ENCODE measurements at regions of chr12 and their contacts with region 1.

Region 1: DNA sequence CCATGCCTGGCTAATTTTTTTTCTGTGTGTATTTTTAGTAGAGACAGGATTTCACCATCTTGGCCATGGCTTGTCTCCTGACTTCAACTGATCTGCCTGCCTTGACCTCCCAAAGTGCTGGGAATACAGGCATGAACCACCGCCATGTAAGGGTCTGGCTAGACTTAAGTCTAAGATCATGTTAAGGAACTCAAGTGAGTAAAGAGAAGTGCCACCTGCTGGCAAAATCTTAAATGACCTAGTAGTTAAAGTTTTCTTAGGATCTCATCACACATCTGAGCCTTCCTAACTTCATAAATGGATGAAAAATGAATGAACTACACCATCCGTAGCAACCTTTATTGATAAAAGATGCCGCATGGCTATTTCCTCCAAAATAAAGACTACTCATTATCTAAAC is 1.7 kb upstream of the C12orf56 start:
- ATAC-seq: peak in 3 of 8 experiments; percentile 45 to 63 (median 57)
- H3K4me3 ChIP-seq: no peak overlapping the region
- H3K27ac ChIP-seq: no peak overlapping the region
- H3K4me1 ChIP-seq: no peaks in the 10 kb centered on the region

Region 2: GRCh38 chr12:64273527-64274403 is 118.5 kb before region 1 on chr12:
- in situ Hi-C with region 1: loop called in 1 of 9 experiments (anchors 5 kb)
- ATAC-seq: peak in 5 of 8 experiments; percentile 53 to 99 (median 86)
- H3K4me3 ChIP-seq: no peak overlapping the region
- H3K27ac ChIP-seq: no peak overlapping the region
- H3K4me1 ChIP-seq: no peaks in the 10 kb centered on the region

Region 3: GRCh38 chr12:64332938-64333337 is 59.3 kb before region 1 on chr12:
- in situ Hi-C with region 1: no loop called
- ATAC-seq: no peak
- H3K4me3 ChIP-seq: no peak overlapping the region
- H3K27ac ChIP-seq: no peak overlapping the region
- H3K4me1 ChIP-seq: no peaks in the 10 kb centered on the region